Aorta (tissue), 5 donors: ENCODE measurements at regions of chr19 and their contacts with region 1.

Region 1: GRCh38 chr19:32971715-32972540 is at the starts of genes CEP89 and FAAP24:
- DNase-seq: peak; percentile 98 to 99
- ATAC-seq: peak; percentile 99
- H3K4me3 ChIP-seq: peak within 1 kb of the TSS; percentile 74 to 78
- H3K27ac ChIP-seq: peak within 1 kb of the TSS in 1 of 2 donors; percentile 24
- H3K4me1 ChIP-seq: no peaks in the 10 kb centered on the region
- H3K27me3 ChIP-seq: no peaks in the 10 kb centered on the region
- total RNA-seq, gene CEP89: 13.7 to 22.6 TPM
- total RNA-seq, gene FAAP24: 1.0 to 1.8 TPM

Region 2: GRCh38 chr19:32580901-32581703 is 390.8 kb before region 1 on chr19 and contains the start of gene PDCD5:
- intact Hi-C with region 1: loop called in 1 of 2 experiments (anchors 5 kb)
- DNase-seq: peak; percentile 98 to 99
- ATAC-seq: peak; percentile 99
- H3K4me3 ChIP-seq: peak within 1 kb of the TSS; percentile 64
- H3K27ac ChIP-seq: peak within 1 kb of the TSS in 1 of 2 donors; percentile 26
- H3K4me1 ChIP-seq: peaks cover 0 to 10% of the 10 kb centered on the region in 2 donors
- H3K27me3 ChIP-seq: no peaks in the 10 kb centered on the region
- total RNA-seq, gene PDCD5: 71.2 to 76.8 TPM

Region 3: DNA sequence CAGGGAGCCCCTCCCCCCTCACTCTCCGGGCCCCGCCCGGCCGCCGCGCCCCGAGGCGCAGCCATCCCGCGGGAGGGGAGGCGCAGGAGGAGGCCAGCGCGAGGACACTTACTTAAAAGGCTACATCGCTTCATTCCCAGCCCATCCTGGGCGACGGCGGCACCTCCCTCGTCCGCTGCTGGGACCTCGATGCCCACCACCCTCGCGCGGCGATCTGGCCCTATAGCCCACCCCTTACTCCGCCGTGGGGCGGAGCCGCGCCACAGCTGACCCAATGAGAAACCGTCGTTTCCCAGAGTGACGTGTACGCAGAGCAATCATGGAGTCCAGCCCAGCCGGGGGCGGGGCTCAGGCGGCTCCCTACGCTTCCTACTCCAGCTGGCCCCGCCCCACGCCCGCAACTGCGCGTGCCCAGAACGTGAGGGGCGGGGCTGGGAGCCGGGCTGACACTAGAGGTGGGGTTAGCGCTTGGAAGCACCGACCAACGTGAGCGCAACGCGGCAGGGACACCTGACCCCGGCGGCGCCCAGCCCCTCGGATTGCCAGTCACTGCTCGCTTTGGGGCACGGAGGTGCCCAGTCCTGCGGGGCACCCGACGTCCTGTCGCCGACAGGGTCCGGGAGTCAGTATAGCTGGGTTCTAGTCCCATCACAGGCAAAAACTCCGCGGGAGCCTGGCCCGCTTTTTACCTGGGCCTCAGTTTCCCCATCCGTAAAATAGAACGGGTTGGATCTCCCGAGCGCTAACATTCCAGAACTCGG is 296.8 kb before region 1 on chr19 and contains the start of gene ANKRD27:
- intact Hi-C with region 1: loop called in 1 of 2 experiments (anchors 10 kb)
- DNase-seq: peak; percentile 99
- ATAC-seq: peak; percentile 99
- H3K4me3 ChIP-seq: peak within 1 kb of the TSS; percentile 66 to 68
- H3K27ac ChIP-seq: peak within 1 kb of the TSS in 1 of 2 donors; percentile 49
- H3K4me1 ChIP-seq: no peaks in the 10 kb centered on the region
- H3K27me3 ChIP-seq: no peaks in the 10 kb centered on the region
- total RNA-seq, gene ANKRD27: 28.8 to 30.9 TPM

Region 4: DNA sequence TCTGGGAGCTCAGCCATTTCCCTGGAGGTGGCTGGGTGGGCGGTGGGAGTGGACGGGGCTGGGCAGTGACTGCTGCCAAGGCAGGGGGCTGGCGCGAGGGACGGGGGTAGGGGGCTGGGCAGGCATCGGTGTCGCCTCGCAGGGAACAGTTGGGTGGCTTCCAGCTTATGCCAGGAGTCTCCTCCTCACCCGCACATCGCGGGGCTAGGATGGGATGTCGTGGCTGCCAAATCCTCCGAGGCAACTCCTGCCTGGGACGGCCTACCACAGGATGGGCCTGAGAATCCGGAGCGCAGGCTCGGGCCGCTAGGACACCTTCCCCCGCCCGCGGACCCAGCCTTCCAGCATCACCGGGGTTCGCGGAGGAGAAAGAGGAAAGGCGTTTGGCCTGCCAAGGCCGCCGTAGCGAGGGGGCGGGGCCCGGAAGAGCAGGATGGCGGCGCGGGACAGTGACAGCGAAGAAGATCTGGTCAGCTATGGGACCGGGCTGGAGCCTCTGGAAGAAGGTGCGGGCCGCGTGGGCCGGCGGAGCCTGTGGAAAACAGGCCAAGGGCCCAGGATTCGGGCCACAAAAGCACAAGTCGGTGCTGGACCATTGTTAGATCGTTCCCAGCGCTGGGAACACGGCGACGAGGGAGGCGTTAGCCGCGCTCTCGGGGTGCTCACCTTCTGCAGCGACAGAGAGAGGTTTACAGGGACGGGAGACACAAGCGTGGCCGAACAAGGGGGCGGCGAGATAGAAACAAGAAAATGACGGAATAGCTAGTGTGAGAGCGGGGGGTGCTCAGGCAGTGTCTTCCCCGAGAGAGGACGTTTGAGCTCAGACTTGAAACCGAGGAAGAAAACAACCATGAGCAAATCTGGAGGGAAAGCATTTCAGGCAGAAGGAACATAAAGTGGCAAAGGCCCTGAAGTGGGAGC is 109.1 kb after region 1 on chr19 and contains the start of gene GPATCH1:
- intact Hi-C with region 1: loop called (anchors 5 to 10 kb)
- DNase-seq: peak; percentile 90 to 96
- ATAC-seq: peak; percentile 95
- H3K4me3 ChIP-seq: peak within 1 kb of the TSS; percentile 55 to 84
- H3K27ac ChIP-seq: no peak within 1 kb of the TSS
- H3K4me1 ChIP-seq: peaks cover 4 to 5% of the 10 kb centered on the region in 2 donors
- H3K27me3 ChIP-seq: no peaks in the 10 kb centered on the region
- total RNA-seq, gene GPATCH1: 7.9 to 8.9 TPM

Region 5: GRCh38 chr19:33176670-33177416 is 204.9 kb after region 1 on chr19:
- intact Hi-C with region 1: loop called in 1 of 2 experiments (anchors 10 kb)
- DNase-seq: peak; percentile 97 to 98
- ATAC-seq: peak; percentile 97
- H3K4me3 ChIP-seq: peak overlapping the region; percentile 59 to 79
- H3K27ac ChIP-seq: peak overlapping the region; percentile 67 to 86
- H3K4me1 ChIP-seq: no peaks in the 10 kb centered on the region
- H3K27me3 ChIP-seq: no peaks in the 10 kb centered on the region

Region 6: DNA sequence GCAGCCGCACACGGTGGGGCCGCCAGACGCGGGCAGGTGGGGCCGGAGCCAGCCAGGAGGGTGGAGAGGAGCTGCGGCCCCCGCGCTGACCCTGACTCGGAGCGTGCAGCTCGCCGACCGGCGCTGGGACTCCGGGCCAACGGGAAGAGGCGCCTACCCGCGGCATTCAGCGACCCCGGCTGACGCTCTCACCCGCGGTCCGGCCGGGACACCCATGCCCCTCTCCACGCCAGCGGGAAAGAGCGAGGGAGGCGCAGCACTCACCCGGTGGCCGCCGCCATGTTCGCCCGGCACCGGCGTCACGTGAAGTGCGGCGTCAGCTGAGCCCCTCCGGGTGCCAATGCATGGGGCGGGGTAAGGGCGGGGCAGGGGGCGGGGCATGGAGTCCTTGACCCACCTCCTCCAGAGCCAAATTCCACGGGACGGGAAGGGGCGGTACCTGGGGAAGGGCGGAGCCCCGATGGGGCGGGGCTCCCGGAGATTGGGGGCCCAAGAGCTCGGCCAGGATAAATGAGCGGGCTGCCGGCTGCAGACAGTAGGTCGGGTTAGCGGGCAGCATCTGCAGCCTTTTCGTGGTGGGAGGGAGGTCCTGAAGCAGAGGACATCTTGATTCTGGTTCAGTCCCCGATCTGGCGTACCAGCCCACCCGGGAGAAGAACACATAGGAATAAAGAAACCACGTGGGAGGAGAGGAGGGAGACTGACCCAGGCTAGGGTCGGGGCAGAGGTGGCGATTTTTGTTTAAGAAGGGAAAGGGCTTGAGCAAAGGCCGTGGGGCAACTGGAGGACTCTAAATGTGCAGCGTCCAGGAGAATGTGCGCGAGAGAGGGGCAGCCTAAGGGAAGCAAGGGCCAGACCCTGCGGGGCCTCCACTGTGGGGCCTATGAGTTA is 549.8 kb after region 1 on chr19 and contains the start of gene PEPD:
- intact Hi-C with region 1: loop called in 1 of 2 experiments (anchors 10 kb)
- DNase-seq: peak; percentile 92 to 97
- ATAC-seq: peak; percentile 96
- H3K4me3 ChIP-seq: peak within 1 kb of the TSS; percentile 67 to 90
- H3K27ac ChIP-seq: no peak within 1 kb of the TSS
- H3K4me1 ChIP-seq: no peaks in the 10 kb centered on the region
- H3K27me3 ChIP-seq: no peaks in the 10 kb centered on the region
- total RNA-seq, gene PEPD: 54.3 to 56.6 TPM